ENCODE measurements at regions of chr1 and their contacts with region 1.

Region 1: GRCh38 chr1:86380257-86380861 is 15.8 kb downstream of the ODF2L start:
- DNase-seq: peak; percentile 45
- ATAC-seq: peak; percentile 78
- H3K4me3 ChIP-seq: 0 out of 2 replicates have a peak overlapping the region, but pooled peaks have one; percentile 3
- H3K27ac ChIP-seq: 0 out of 2 replicates have a peak overlapping the region, but pooled peaks have one; percentile 6
- H3K4me1 ChIP-seq: no peaks in the 10 kb centered on the region
- H3K27me3 ChIP-seq: no peaks in the 10 kb centered on the region
- CTCF ChIP-seq: peak; percentile 64 to 84 (median 66); a peak in 5 of 6 replicates
- EP300 ChIP-seq: no peak
- POLR2A ChIP-seq: no peak
- RAD21 ChIP-seq: peak; percentile 86

Region 2: DNA sequence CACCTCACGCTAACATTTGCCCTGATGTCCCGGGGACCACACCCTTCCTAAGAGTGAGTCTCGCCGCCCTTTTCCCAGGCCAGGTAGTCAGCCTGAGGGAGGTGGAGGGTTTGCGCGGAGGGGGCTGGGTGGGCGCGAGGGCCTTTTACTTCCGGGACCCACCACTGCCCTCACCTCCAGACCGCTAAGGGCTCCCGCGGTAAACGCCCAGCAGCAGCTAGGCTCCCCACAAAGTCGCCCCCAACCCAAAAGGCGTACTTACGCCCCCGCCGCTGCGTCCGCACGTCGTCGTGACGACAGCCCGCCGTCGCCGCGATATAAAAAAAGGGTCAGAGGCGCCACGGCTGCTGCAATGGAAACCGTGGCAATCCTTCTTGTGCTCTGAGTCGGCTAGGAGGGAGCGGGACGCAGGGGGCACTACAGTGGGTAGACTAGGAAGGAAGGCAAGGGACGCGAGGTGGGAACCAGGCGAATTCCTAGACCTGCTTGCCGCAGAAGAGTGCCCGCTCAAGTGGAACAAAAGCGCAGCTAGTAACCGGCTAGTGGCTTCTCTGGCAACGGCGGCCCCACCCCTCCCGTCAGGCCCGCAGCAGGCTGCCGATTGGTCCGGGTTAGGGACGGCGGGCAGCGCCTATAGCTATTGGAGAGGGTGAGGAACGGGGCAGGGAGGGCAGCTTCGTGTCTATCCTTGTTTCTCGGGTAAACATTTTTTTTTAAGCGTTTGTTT is 15.6 kb after region 1 on chr1 and contains the start of gene ODF2L:
- CTCF ChIA-PET with region 1: interaction called, 17 read pairs
- POLR2A ChIA-PET with region 1: no interaction called
- RAD21 ChIA-PET with region 1: interaction called, 8 read pairs
- SMC1A ChIA-PET with region 1: interaction called, 20 read pairs
- in situ Hi-C with region 1: no loop called
- intact Hi-C with region 1: no loop called
- DNase-seq: peak; percentile 46
- ATAC-seq: peak; percentile 100
- H3K4me3 ChIP-seq: peak within 1 kb of the TSS; percentile 96
- H3K27ac ChIP-seq: peak within 1 kb of the TSS; percentile 54
- H3K4me1 ChIP-seq: no peaks in the 10 kb centered on the region
- H3K27me3 ChIP-seq: no peaks in the 10 kb centered on the region
- CTCF ChIP-seq: no peak
- EP300 ChIP-seq: no peak
- POLR2A ChIP-seq: peak; percentile 57; the same call in 1 of the 2 replicates
- RAD21 ChIP-seq: no peak
- polyA plus RNA-seq, gene ODF2L: 20.0 to 25.9 TPM

Region 3: DNA sequence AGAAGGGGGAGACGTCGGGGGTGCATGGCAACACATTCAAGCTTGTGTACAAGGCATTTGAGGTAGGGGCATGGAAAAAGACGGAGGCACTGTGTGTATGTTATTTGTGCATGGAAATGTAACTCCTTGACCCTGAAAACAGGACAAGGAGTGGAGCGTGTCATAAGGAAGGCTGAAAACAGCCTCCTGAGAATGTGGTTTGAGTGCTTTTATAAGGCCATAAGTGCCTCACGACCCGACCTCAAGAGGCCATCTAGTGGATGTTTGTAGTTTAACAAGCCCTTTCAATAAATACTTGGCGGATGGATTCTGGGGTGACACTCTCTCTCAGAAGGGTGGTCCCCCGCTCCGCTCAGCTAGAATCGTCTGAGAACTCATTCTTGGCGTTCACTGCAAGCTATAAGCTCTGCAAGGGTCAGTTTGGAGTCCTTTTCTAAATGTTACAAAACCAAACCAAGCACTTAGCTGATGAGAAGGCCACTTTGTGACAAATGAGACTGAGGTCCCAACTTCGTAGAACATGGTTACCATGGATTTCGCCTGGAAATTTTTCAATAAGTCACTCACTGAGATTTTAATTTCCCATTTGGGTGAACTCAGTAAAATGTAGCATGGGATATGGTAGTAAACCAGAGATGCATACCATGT is 127.7 kb after region 1 on chr1:
- CTCF ChIA-PET with region 1: interaction called, 104 read pairs
- POLR2A ChIA-PET with region 1: no interaction called
- RAD21 ChIA-PET with region 1: interaction called, 6 read pairs
- SMC1A ChIA-PET with region 1: interaction called, 16 read pairs
- in situ Hi-C with region 1: loop called (anchors 5 kb)
- intact Hi-C with region 1: no loop called
- DNase-seq: no peak
- ATAC-seq: peak; percentile 76
- H3K4me3 ChIP-seq: no peak overlapping the region
- H3K27ac ChIP-seq: no peak overlapping the region
- H3K4me1 ChIP-seq: no peaks in the 10 kb centered on the region
- H3K27me3 ChIP-seq: peaks cover 0 to 2% of the 10 kb centered on the region in 2 experiments; a peak in 3 of 4 replicates
- CTCF ChIP-seq: peak; percentile 36 to 51 (median 47); a peak in 5 of 6 replicates
- EP300 ChIP-seq: no peak
- POLR2A ChIP-seq: no peak
- RAD21 ChIP-seq: 0 out of 2 replicates have a peak, but pooled peaks have one; percentile 34

Region 4: GRCh38 chr1:86704458-86704971 is 324.2 kb after region 1 on chr1 and contains the start of gene SH3GLB1:
- CTCF ChIA-PET with region 1: interaction called, 6 read pairs
- POLR2A ChIA-PET with region 1: no interaction called
- RAD21 ChIA-PET with region 1: interaction called, 4 read pairs
- SMC1A ChIA-PET with region 1: interaction called, 3 read pairs
- in situ Hi-C with region 1: loop called (anchors 10 kb)
- intact Hi-C with region 1: loop called (anchors 1 kb)
- DNase-seq: peak; percentile 61
- ATAC-seq: peak; percentile 92
- H3K4me3 ChIP-seq: peak within 1 kb of the TSS; percentile 93
- H3K27ac ChIP-seq: peak within 1 kb of the TSS; percentile 94
- H3K4me1 ChIP-seq: no peaks in the 10 kb centered on the region
- H3K27me3 ChIP-seq: no peaks in the 10 kb centered on the region
- CTCF ChIP-seq: peak; percentile 83 to 90 (median 84)
- EP300 ChIP-seq: no peak; a peak in 1 of 4 replicates
- POLR2A ChIP-seq: peak; percentile 90
- RAD21 ChIP-seq: peak; percentile 49
- polyA plus RNA-seq, gene SH3GLB1: 19.8 to 20.2 TPM

Region 5: DNA sequence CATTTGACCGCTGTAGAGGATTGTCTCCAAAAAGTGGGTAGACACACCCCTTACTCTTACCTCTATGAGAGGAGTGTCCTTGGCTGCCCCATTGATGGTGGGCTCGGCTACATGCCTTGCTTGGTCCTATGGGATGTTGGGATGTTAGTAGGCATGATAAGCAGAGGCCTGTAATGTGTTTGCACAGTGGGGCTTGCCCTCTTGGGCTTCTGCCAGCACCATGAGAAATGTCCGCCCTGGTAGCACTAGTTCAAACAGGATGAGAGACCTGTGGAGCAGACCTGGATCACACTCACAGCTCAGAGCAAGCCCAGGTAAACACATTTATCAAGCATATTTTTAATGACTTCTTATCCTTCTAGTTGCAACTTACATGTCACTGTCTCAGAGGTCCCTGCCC is 378.2 kb after region 1 on chr1:
- CTCF ChIA-PET with region 1: no interaction called
- POLR2A ChIA-PET with region 1: no interaction called
- RAD21 ChIA-PET with region 1: no interaction called
- SMC1A ChIA-PET with region 1: no interaction called
- in situ Hi-C with region 1: no loop called
- intact Hi-C with region 1: no loop called
- DNase-seq: no peak
- ATAC-seq: no peak
- H3K4me3 ChIP-seq: no peak overlapping the region
- H3K27ac ChIP-seq: no peak overlapping the region
- H3K4me1 ChIP-seq: no peaks in the 10 kb centered on the region; the same call in 1 of the 2 replicates
- H3K27me3 ChIP-seq: no peaks in the 10 kb centered on the region; a peak in 1 of 4 replicates
- CTCF ChIP-seq: no peak
- EP300 ChIP-seq: no peak
- POLR2A ChIP-seq: no peak
- RAD21 ChIP-seq: no peak

Region 6: DNA sequence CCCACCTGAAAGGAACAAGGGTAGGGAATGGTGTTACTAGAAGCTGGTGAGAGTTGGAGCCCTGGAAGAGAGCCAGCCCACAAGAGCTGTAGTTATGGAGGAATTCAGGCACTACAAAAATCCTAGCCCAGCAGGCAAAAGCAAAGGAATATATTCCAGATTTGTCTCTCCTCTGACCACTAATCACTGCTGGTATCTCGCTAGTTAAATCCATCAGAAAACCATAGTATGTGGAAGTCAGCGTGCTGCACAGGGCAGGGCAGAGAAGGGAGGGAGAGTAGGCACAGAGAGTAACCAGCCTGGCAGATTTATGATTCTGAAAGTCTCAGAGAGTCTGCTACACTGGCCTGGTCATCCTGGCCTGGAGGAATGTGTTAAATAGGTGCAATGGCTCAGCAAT is 445.0 kb after region 1 on chr1:
- CTCF ChIA-PET with region 1: interaction called, 3 read pairs
- POLR2A ChIA-PET with region 1: no interaction called
- RAD21 ChIA-PET with region 1: no interaction called
- SMC1A ChIA-PET with region 1: no interaction called
- in situ Hi-C with region 1: no loop called
- intact Hi-C with region 1: loop called (anchors 5 kb)
- DNase-seq: no peak
- ATAC-seq: no peak
- H3K4me3 ChIP-seq: no peak overlapping the region
- H3K27ac ChIP-seq: no peak overlapping the region
- H3K4me1 ChIP-seq: no peaks in the 10 kb centered on the region
- H3K27me3 ChIP-seq: no peaks in the 10 kb centered on the region
- CTCF ChIP-seq: no peak
- EP300 ChIP-seq: no peak
- POLR2A ChIP-seq: no peak
- RAD21 ChIP-seq: no peak